Psoas muscle (tissue), 8 donors: ENCODE measurements at regions of chr20 and their contacts with region 1.

Region 1: GRCh38 chr20:60292001-60292520 is 333.8 kb downstream of the CDH26 start:
- DNase-seq: no peak
- ATAC-seq: no peak
- H3K4me3 ChIP-seq: no peak overlapping the region
- H3K27ac ChIP-seq: no peak overlapping the region
- H3K4me1 ChIP-seq: no peaks in the 10 kb centered on the region
- H3K27me3 ChIP-seq: peaks cover 0 to 2% (median 0%) of the 10 kb centered on the region in 3 donors
- CTCF ChIP-seq: no peak

Region 2: DNA sequence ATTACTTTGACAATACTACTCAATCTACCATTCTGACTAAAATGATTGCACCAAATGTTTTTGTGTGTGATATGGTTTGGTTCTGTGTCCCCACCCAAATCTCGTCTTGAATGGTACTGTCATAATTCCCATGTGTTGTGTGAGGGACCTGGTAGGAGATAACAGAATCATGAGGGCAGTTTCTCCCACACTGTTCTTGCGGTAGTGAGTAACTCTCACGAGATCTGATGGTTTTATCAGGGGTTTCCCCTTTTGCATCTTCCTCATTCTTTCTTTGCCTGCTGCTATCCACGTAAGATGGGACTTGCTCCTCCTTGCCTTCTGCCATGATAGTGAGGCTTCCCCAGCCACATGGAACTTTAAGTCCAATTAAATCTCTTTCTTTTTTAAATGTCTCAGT is 379.5 kb before region 1 on chr20:
- intact Hi-C with region 1: no loop called
- DNase-seq: no peak
- ATAC-seq: no peak
- H3K4me3 ChIP-seq: no peak overlapping the region
- H3K27ac ChIP-seq: no peak overlapping the region
- H3K4me1 ChIP-seq: no peaks in the 10 kb centered on the region
- H3K27me3 ChIP-seq: no peaks in the 10 kb centered on the region
- CTCF ChIP-seq: no peak

Region 3: GRCh38 chr20:60238992-60239660 is 52.9 kb before region 1 on chr20:
- intact Hi-C with region 1: loop called in 1 of 2 experiments (anchors 10 kb)
- DNase-seq: no peak
- ATAC-seq: no peak
- H3K4me3 ChIP-seq: no peak overlapping the region
- H3K27ac ChIP-seq: no peak overlapping the region
- H3K4me1 ChIP-seq: no peaks in the 10 kb centered on the region
- H3K27me3 ChIP-seq: peaks cover 0 to 4% (median 0%) of the 10 kb centered on the region in 3 donors
- CTCF ChIP-seq: no peak

Region 4: DNA sequence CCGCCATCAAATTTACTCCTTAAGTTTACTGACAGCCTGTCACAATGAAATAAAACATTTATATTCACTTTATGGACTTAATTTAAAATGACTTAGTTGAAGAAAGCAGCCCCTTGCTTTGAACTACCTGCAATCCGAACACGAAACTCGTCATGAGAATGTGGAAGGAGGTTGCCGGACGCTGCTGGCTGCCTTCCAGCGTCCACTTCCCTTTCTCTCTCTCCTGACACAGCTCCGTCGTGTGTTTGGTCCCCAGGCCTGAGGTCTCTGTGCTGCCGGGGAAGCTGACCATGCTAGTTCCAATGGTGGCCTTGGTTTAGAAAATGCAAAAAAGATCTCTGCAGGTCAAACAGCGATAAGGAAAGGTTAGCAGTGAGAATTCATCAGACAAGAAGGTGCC is 185.9 kb after region 1 on chr20:
- intact Hi-C with region 1: no loop called
- DNase-seq: no peak
- ATAC-seq: no peak
- H3K4me3 ChIP-seq: no peak overlapping the region
- H3K27ac ChIP-seq: no peak overlapping the region
- H3K4me1 ChIP-seq: no peaks in the 10 kb centered on the region
- H3K27me3 ChIP-seq: peaks cover 0 to 4% (median 0%) of the 10 kb centered on the region in 3 donors
- CTCF ChIP-seq: no peak

Region 5: DNA sequence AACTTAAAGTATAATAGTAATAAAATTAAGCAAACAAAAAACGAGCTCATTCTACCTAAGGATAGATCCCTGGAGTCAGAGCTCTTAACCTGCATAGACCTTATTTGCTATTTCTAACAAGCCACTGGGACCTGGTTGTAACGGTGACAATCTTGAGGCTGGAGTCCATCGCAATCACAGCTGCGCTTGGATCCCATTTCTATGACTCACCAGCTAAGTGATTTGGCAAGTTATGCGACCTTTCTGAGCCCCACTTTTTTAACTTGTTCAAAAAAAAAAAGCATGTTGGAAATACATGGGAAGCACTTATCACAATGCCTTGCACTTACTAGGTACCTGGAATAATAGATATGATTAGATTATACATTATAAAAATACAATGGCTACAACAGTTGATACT is 570.5 kb after region 1 on chr20:
- intact Hi-C with region 1: no loop called
- DNase-seq: no peak
- ATAC-seq: no peak
- H3K4me3 ChIP-seq: no peak overlapping the region
- H3K27ac ChIP-seq: no peak overlapping the region
- H3K4me1 ChIP-seq: no peaks in the 10 kb centered on the region
- H3K27me3 ChIP-seq: no peaks in the 10 kb centered on the region
- CTCF ChIP-seq: no peak